Sigmoid colon (tissue), 7 donors: ENCODE measurements at regions of chr10 and their contacts with region 1.

Region 1: GRCh38 chr10:133378251-133379096 is 588 bp upstream of the PAOX start:
- DNase-seq: peak; percentile 81
- H3K4me3 ChIP-seq: peak overlapping the region; percentile 64 to 98 (median 80)
- H3K27ac ChIP-seq: peak overlapping the region; percentile 83 to 93 (median 86)
- H3K4me1 ChIP-seq: peaks cover 0 to 32% (median 24%) of the 10 kb centered on the region in 4 donors
- H3K27me3 ChIP-seq: no peaks in the 10 kb centered on the region
- CTCF ChIP-seq: no peak
- EP300 ChIP-seq: no peak
- POLR2A ChIP-seq: peak in 1 of 2 donors; percentile 34

Region 2: GRCh38 chr10:133261726-133262325 is 116.6 kb before region 1 on chr10:
- intact Hi-C with region 1: loop called (anchors 5 kb)
- DNase-seq: peak; percentile 93
- H3K4me3 ChIP-seq: peak overlapping the region; percentile 73 to 99 (median 88)
- H3K27ac ChIP-seq: peak overlapping the region; percentile 87 to 95 (median 90)
- H3K4me1 ChIP-seq: peaks cover 0 to 38% (median 27%) of the 10 kb centered on the region in 4 donors
- H3K27me3 ChIP-seq: peaks cover 0 to 9% (median 0%) of the 10 kb centered on the region in 3 donors
- CTCF ChIP-seq: no peak
- EP300 ChIP-seq: no peak
- POLR2A ChIP-seq: no peak

Region 3: GRCh38 chr10:133364645-133365431 is 13.6 kb before region 1 on chr10:
- intact Hi-C with region 1: no loop called
- DNase-seq: no peak
- H3K4me3 ChIP-seq: no peak overlapping the region
- H3K27ac ChIP-seq: no peak overlapping the region
- H3K4me1 ChIP-seq: no peaks in the 10 kb centered on the region
- H3K27me3 ChIP-seq: no peaks in the 10 kb centered on the region
- CTCF ChIP-seq: no peak
- EP300 ChIP-seq: no peak
- POLR2A ChIP-seq: no peak

Region 4: DNA sequence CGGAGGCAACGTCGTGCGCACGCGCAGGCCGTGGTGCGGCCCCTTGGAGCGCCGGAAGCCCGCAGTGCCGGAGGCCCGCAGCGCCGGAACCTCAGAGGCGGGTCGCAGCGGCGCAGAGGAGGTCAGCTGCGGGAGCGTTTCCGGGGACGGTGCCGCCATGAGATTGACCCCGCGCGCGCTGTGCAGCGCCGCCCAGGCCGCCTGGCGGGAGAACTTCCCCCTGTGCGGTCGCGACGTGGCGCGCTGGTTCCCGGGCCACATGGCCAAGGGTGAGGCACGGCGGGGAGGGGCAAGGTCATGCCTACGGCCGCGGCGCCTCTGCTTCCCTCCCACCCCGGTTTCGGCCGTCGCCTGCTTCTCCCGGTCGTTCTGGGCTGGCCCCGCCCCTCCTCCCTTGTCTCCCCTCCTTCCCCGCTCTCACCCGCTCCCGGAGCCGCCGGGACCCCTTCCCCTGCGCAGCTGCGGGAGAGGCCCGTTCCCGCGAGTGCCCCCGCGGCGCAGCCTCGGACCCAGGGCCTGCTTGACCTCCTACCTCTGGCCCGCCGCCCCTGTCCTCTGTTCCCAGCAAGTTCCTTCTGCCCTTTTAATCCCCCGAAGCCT is 15.7 kb after region 1 on chr10 and contains the start of gene MTG1:
- intact Hi-C with region 1: loop called (anchors 2 kb)
- DNase-seq: peak; percentile 96
- H3K4me3 ChIP-seq: peak within 1 kb of the TSS; percentile 71 to 92 (median 86)
- H3K27ac ChIP-seq: peak within 1 kb of the TSS; percentile 79 to 87 (median 81)
- H3K4me1 ChIP-seq: peaks cover 0 to 20% (median 10%) of the 10 kb centered on the region in 4 donors
- H3K27me3 ChIP-seq: no peaks in the 10 kb centered on the region
- CTCF ChIP-seq: no peak
- EP300 ChIP-seq: no peak
- POLR2A ChIP-seq: peak; percentile 29 to 67
- total RNA-seq, gene MTG1: 14.0 to 28.8 (median 17.0) TPM